Naive thymus-derived CD4-positive, alpha-beta T cell (primary cell): ENCODE measurements at regions of chr11 and their contacts with region 1.

Region 1: DNA sequence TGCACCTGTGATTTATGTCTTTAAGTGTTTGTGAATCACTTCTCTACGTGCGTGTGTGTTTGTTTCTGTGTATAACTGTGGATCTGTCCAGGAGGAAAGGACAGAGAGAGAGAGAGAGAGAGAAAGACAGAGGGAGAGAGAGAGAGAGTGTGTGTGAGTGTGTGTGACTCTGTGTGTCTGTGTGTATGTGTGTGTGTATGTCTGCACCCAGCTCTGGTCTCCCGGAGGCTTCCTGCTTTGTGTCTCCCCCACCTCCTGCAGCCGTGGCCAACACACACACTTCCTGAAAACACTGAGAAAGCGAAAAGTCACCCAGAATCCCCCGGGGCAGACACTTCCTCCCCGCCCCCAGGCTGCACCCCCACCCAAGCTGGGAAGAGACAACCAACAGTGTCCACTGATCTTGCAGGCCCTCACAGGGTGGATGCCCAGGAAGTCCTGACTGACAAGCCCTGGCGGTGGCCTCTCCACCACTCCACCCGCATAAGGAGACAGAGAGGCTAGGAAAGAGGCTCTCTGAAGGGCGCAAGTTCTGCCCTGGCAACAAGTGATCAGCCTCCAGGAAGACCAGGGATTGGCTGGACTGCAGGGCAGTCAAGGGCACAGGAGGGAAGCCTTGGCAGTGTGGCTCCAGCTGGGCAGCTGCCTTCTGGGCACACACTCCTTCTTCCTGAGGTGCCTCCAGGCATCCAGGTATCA is 30.0 kb downstream of the ARAP1 start:
- DNase-seq: peak; percentile 71 to 92 (median 91)
- ATAC-seq: peak; percentile 86
- H3K4me3 ChIP-seq: peak overlapping the region; percentile 98
- H3K4me3 Mint-ChIP-seq: peak overlapping the region; percentile 88 to 99 (median 94)
- H3K27ac ChIP-seq: peak overlapping the region; percentile 78
- H3K27ac Mint-ChIP-seq: peak overlapping the region; percentile 87 to 99 (median 96)
- H3K4me1 ChIP-seq: peaks cover 46 to 49% of the 10 kb centered on the region in 2 donors
- H3K4me1 Mint-ChIP-seq: peaks cover 50 to 80% (median 62%) of the 10 kb centered on the region in 7 donors
- H3K27me3 ChIP-seq: no peaks in the 10 kb centered on the region
- H3K27me3 Mint-ChIP-seq: no peaks in the 10 kb centered on the region

Region 2: GRCh38 chr11:72736452-72737069 is 14.4 kb after region 1 on chr11:
- CTCF ChIA-PET with region 1: interaction called, 26 read pairs
- POLR2A ChIA-PET with region 1: interaction called, 8 read pairs
- intact Hi-C with region 1: loop called (anchors 1 kb)
- DNase-seq: peak; percentile 47 to 83 (median 79)
- ATAC-seq: peak; percentile 86
- H3K4me3 ChIP-seq: peak overlapping the region; percentile 21
- H3K4me3 Mint-ChIP-seq: peak overlapping the region; percentile 61 to 87 (median 72)
- H3K27ac ChIP-seq: peak overlapping the region; percentile 67
- H3K27ac Mint-ChIP-seq: peak overlapping the region; percentile 89 to 99 (median 97)
- H3K4me1 ChIP-seq: peaks cover 33 to 44% of the 10 kb centered on the region in 2 donors
- H3K4me1 Mint-ChIP-seq: peaks cover 49 to 70% (median 59%) of the 10 kb centered on the region in 7 donors
- H3K27me3 ChIP-seq: no peaks in the 10 kb centered on the region
- H3K27me3 Mint-ChIP-seq: no peaks in the 10 kb centered on the region

Region 3: GRCh38 chr11:72793425-72794367 is 71.5 kb after region 1 on chr11 and contains the start of gene STARD10:
- CTCF ChIA-PET with region 1: interaction called, 102 read pairs
- POLR2A ChIA-PET with region 1: interaction called, 31 read pairs
- intact Hi-C with region 1: loop called (anchors 1 kb)
- DNase-seq: peak; percentile 90 to 97 (median 96)
- ATAC-seq: peak; percentile 97
- H3K4me3 ChIP-seq: peak within 1 kb of the TSS; percentile 89
- H3K4me3 Mint-ChIP-seq: peak within 1 kb of the TSS; percentile 78 to 100 (median 98)
- H3K27ac ChIP-seq: peak within 1 kb of the TSS; percentile 99
- H3K27ac Mint-ChIP-seq: peak within 1 kb of the TSS; percentile 99 to 100 (median 99)
- H3K4me1 ChIP-seq: peaks cover 16 to 18% of the 10 kb centered on the region in 2 donors
- H3K4me1 Mint-ChIP-seq: peaks cover 19 to 35% (median 28%) of the 10 kb centered on the region in 7 donors
- H3K27me3 ChIP-seq: no peaks in the 10 kb centered on the region
- H3K27me3 Mint-ChIP-seq: no peaks in the 10 kb centered on the region
- total RNA-seq, gene STARD10: 10.9 to 26.1 (median 16.4) TPM

Region 4: GRCh38 chr11:72924568-72925190 is 202.5 kb after region 1 on chr11:
- CTCF ChIA-PET with region 1: no interaction called
- POLR2A ChIA-PET with region 1: no interaction called
- intact Hi-C with region 1: no loop called
- DNase-seq: peak in 5 of 9 donors; percentile 18 to 49 (median 41)
- ATAC-seq: peak; percentile 61
- H3K4me3 ChIP-seq: no peak overlapping the region
- H3K4me3 Mint-ChIP-seq: no peak overlapping the region
- H3K27ac ChIP-seq: no peak overlapping the region
- H3K27ac Mint-ChIP-seq: peak overlapping the region in 5 of 9 donors; percentile 20 to 65 (median 34)
- H3K4me1 ChIP-seq: no peaks in the 10 kb centered on the region
- H3K4me1 Mint-ChIP-seq: peaks cover 4 to 18% (median 12%) of the 10 kb centered on the region in 7 donors
- H3K27me3 ChIP-seq: no peaks in the 10 kb centered on the region
- H3K27me3 Mint-ChIP-seq: no peaks in the 10 kb centered on the region

Region 5: DNA sequence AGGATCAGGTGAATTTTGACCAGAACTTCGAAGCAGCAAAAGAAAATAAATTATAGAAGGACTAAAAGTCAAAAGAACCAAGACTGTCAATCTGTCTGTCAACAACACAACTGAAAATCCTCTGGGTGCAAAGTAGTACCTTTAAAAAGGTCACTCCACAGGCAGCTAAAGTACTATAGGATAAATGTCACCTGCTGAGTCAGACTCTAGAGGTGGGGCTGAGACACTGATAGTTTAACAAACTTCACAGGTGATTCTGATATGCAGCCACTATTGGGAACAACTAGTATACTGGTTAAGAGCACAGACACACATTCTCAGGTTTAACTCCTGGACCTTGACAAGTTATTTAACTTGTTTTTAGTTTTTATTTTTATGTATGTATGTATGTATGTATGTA is 312.6 kb after region 1 on chr11:
- CTCF ChIA-PET with region 1: no interaction called
- POLR2A ChIA-PET with region 1: interaction called, 3 read pairs
- intact Hi-C with region 1: loop called in 1 of 2 experiments (anchors 1 kb)
- DNase-seq: no peak
- ATAC-seq: peak; percentile 31
- H3K4me3 ChIP-seq: peak overlapping the region; percentile 22
- H3K4me3 Mint-ChIP-seq: peak overlapping the region; percentile 17 to 83 (median 72)
- H3K27ac ChIP-seq: no peak overlapping the region
- H3K27ac Mint-ChIP-seq: peak overlapping the region; percentile 61 to 90 (median 78)
- H3K4me1 ChIP-seq: peaks cover 8 to 20% of the 10 kb centered on the region in 2 donors
- H3K4me1 Mint-ChIP-seq: peaks cover 23 to 70% (median 57%) of the 10 kb centered on the region in 7 donors
- H3K27me3 ChIP-seq: no peaks in the 10 kb centered on the region
- H3K27me3 Mint-ChIP-seq: no peaks in the 10 kb centered on the region

Region 6: DNA sequence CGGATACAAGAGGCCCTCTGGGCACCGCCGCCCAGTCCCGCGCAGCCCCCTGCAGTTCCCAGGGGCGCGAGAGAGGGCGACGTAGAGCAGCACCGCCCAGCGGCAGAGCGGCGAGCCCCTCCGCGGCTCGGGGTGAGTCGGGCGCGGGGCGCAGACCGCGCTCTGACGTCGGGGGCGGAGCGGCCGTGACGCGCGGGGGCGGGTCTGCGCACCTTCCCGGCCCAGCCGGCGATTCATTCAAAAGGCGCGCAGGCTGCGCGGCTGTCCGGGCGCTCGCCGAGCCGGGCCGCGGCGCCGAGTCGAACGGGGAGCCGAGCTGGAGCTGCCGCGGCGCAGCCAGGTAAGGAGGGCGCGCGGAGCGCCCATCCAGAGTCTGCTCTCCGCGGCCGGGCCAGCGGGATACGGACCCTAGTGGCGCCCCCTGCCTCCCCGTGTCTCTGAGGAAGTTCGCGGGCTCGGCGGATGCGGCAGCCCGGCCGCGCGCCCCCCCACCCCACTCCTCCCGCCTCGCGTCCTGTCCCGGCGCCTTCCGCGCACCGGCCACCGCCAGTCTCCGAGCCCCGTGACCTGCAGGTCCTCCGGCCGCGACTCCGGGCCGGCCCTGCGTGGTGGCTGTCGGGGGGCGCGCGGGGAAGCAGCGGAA is 654.1 kb after region 1 on chr11 and contains the start of gene RELT:
- CTCF ChIA-PET with region 1: no interaction called
- POLR2A ChIA-PET with region 1: no interaction called
- intact Hi-C with region 1: loop called in 1 of 2 experiments (anchors 1 kb)
- DNase-seq: peak; percentile 84 to 99 (median 96)
- ATAC-seq: peak; percentile 93
- H3K4me3 ChIP-seq: peak within 1 kb of the TSS; percentile 84
- H3K4me3 Mint-ChIP-seq: peak within 1 kb of the TSS; percentile 86 to 99 (median 92)
- H3K27ac ChIP-seq: peak within 1 kb of the TSS; percentile 92
- H3K27ac Mint-ChIP-seq: peak within 1 kb of the TSS; percentile 87 to 99 (median 95)
- H3K4me1 ChIP-seq: peaks cover 12 to 22% of the 10 kb centered on the region in 2 donors
- H3K4me1 Mint-ChIP-seq: peaks cover 32 to 49% (median 41%) of the 10 kb centered on the region in 7 donors
- H3K27me3 ChIP-seq: no peaks in the 10 kb centered on the region
- H3K27me3 Mint-ChIP-seq: no peaks in the 10 kb centered on the region
- total RNA-seq, gene RELT: 11.9 to 275 (median 28.4) TPM